Colonic mucosa (tissue), 4 donors: ENCODE measurements at regions of chr5 and their contacts with region 1.

Region 1: GRCh38 chr5:176609724-176610434 is at the start of gene GPRIN1:
- DNase-seq: peak; percentile 63
- H3K4me3 ChIP-seq: peak within 1 kb of the TSS; percentile 69
- H3K27ac ChIP-seq: no peak within 1 kb of the TSS
- H3K4me1 ChIP-seq: no peaks in the 10 kb centered on the region
- H3K27me3 ChIP-seq: peaks cover 5% of the 10 kb centered on the region
- CTCF ChIP-seq: no peak
- total RNA-seq, gene GPRIN1: 2.1 to 3.1 TPM

Region 2: GRCh38 chr5:176647030-176647866 is 37.4 kb after region 1 on chr5 and contains the start of gene TSPAN17:
- intact Hi-C with region 1: loop called (anchors 5 kb)
- DNase-seq: peak; percentile 100
- H3K4me3 ChIP-seq: peak within 1 kb of the TSS; percentile 80
- H3K27ac ChIP-seq: peak within 1 kb of the TSS; percentile 37
- H3K4me1 ChIP-seq: peaks cover 11% of the 10 kb centered on the region
- H3K27me3 ChIP-seq: no peaks in the 10 kb centered on the region
- CTCF ChIP-seq: no peak
- total RNA-seq, gene TSPAN17: 30.5 to 36.1 TPM

Region 3: GRCh38 chr5:176725521-176726280 is 115.8 kb after region 1 on chr5:
- intact Hi-C with region 1: no loop called
- DNase-seq: no peak
- H3K4me3 ChIP-seq: no peak overlapping the region
- H3K27ac ChIP-seq: no peak overlapping the region
- H3K4me1 ChIP-seq: no peaks in the 10 kb centered on the region
- H3K27me3 ChIP-seq: no peaks in the 10 kb centered on the region
- CTCF ChIP-seq: no peak